GM13976 (cell line): ENCODE measurements at regions of chr1 and their contacts with region 1.

Region 1: GRCh38 chr1:50959913-50960844 is at the start of gene FAF1:
- DNase-seq: peak; percentile 97
- CTCF ChIP-seq: no peak

Region 2: DNA sequence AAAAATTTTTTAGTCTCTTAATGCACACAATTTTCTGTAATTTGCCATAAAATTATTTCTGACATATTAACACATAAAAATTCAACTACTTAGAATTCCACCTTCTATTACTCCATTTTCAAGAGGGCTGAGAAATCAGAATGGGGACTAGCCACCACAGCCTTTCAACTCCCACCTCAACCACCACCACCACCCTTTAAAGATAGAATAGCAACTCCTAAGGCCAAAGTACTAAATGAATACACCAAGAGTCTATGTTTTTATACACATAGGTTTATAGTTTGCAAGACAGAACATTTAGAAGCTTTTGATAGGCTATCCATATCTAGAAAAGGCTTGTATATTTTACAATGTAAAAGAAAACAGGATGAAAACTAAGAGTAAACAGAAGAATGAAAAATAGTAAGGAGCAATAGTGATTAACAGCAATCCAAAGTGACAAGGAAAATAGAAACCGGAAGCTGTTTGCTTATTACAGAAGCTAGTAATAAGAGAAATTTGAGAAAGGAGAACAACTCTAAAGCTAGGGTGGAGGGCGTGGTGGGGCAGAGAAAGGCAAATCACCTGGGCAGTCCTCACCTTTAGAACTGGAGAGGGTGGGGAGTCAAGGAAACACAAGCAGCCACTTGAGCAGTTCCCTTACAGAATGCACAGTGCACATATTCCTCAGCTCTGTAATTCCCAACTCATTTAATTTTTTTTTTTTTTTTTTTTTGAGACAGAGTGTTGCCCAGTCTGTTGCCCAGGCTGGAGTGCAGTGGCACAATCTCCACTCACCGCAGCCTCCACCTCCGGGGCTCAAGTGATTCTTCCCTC is 531.2 kb after region 1 on chr1:
- in situ Hi-C with region 1: no loop called
- DNase-seq: peak; percentile 27
- CTCF ChIP-seq: no peak

Region 3: GRCh38 chr1:51535006-51535592 is 574.9 kb after region 1 on chr1:
- in situ Hi-C with region 1: loop called (anchors 25 kb)
- DNase-seq: no peak
- CTCF ChIP-seq: peak; percentile 78